Activated naive CD4-positive, alpha-beta T cell treated with anti-CD3 and anti-CD28 coated beads for 36 hours (primary cell): ENCODE measurements at regions of chr20 and their contacts with region 1.

Region 1: GRCh38 chr20:36741072-36741471 is 4.8 kb downstream of the NDRG3 start:
- DNase-seq: no peak
- H3K4me3 Mint-ChIP-seq: no peak overlapping the region
- H3K27ac Mint-ChIP-seq: no peak overlapping the region
- H3K4me1 Mint-ChIP-seq: peaks cover 19% of the 10 kb centered on the region
- H3K27me3 Mint-ChIP-seq: no peaks in the 10 kb centered on the region

Region 2: GRCh38 chr20:36562724-36563123 is 178.3 kb before region 1 on chr20:
- CTCF ChIA-PET with region 1: no interaction called
- intact Hi-C with region 1: no loop called
- DNase-seq: no peak
- H3K4me3 Mint-ChIP-seq: no peak overlapping the region
- H3K27ac Mint-ChIP-seq: no peak overlapping the region
- H3K4me1 Mint-ChIP-seq: no peaks in the 10 kb centered on the region
- H3K27me3 Mint-ChIP-seq: no peaks in the 10 kb centered on the region

Region 3: DNA sequence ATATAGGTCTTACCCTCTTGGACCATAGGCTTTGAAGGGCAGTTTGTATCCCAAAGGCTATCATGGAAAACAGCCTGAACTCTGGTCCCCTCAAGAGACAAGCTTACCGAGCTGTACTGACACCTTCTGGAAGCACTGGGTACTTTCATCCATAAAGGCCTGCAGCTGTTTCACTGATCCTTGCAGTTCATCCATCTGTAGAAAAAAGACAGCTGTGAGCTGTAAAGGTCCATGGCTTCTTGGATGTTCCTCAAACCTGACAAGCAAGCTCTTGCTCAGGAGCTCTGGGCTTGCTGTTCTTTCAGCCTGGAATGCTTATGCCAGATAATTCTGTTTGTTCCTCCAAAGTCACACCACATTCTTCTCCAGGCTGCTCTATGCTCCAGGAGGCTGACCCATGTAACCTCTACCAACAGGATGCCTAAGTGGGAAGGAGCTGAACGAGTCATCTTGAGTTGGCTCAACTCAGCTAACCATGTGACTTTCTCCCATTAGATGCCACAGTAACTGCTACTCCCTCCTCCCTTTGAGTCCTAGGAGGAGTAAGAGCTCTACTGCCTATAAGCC is 13.7 kb after region 1 on chr20:
- CTCF ChIA-PET with region 1: interaction called, 14 read pairs
- intact Hi-C with region 1: no loop called
- DNase-seq: peak; percentile 52
- H3K4me3 Mint-ChIP-seq: no peak overlapping the region
- H3K27ac Mint-ChIP-seq: no peak overlapping the region
- H3K4me1 Mint-ChIP-seq: peaks cover 6% of the 10 kb centered on the region
- H3K27me3 Mint-ChIP-seq: no peaks in the 10 kb centered on the region